ENCODE measurements at regions of chr14 and their contacts with region 1.

Region 1: GRCh38 chr14:106417224-106418049 is 891.1 kb downstream of the TMEM121 start:
- DNase-seq: peak; percentile 88
- H3K4me3 Mint-ChIP-seq: no peak overlapping the region
- H3K27ac Mint-ChIP-seq: no peak overlapping the region
- H3K4me1 Mint-ChIP-seq: peaks cover 7% of the 10 kb centered on the region
- H3K27me3 Mint-ChIP-seq: peaks cover 16% of the 10 kb centered on the region

Region 2: GRCh38 chr14:106277503-106277902 is 139.9 kb before region 1 on chr14:
- CTCF ChIA-PET with region 1: interaction called, 15 read pairs
- POLR2A ChIA-PET with region 1: no interaction called
- DNase-seq: peak; percentile 21
- H3K4me3 Mint-ChIP-seq: peak overlapping the region; percentile 14
- H3K27ac Mint-ChIP-seq: no peak overlapping the region
- H3K4me1 Mint-ChIP-seq: peaks cover 24% of the 10 kb centered on the region
- H3K27me3 Mint-ChIP-seq: peaks cover 25% of the 10 kb centered on the region

Region 3: DNA sequence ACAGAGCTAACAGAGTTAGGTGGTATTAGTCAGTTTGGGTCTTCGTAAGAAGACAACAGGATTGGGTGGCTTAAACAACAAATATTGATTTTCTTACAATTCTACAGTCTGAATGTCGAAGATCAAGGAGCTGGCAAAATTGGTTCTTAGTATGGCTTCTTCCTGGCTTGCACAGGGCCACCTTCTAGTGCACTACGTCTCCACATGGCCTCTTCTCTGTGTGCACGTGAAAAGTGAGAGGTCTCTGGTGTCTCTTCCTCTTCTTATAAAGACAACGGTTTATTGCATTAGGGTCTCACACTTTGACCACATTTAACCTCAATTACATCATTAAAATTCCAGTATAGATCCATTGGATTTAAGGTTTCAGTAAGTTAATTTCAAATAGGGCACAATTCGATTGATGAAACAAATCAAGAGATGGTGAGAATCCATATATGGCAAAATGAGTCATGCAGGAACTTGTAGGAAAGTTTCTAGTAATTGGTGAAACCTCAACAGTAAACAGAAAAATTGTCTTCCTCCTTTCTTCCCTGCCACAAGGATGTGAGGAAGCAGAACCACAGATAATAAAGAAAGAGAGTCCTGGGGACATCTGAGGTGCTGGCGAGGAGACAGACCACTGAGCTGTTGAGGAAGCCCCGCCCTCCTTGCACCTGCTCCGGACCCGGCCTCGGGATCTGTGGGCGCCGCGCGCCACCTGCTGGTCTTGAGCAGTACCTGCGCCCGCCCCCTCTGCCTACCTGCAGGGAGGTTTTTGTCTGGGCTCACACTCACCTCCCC is 44.4 kb before region 1 on chr14:
- CTCF ChIA-PET with region 1: interaction called, 58 read pairs
- POLR2A ChIA-PET with region 1: no interaction called
- DNase-seq: peak; percentile 79
- H3K4me3 Mint-ChIP-seq: no peak overlapping the region
- H3K27ac Mint-ChIP-seq: no peak overlapping the region
- H3K4me1 Mint-ChIP-seq: peaks cover 24% of the 10 kb centered on the region
- H3K27me3 Mint-ChIP-seq: peaks cover 11% of the 10 kb centered on the region

Region 4: GRCh38 chr14:106395456-106396050 is 21.9 kb before region 1 on chr14:
- CTCF ChIA-PET with region 1: interaction called, 66 read pairs
- POLR2A ChIA-PET with region 1: no interaction called
- DNase-seq: no peak
- H3K4me3 Mint-ChIP-seq: no peak overlapping the region
- H3K27ac Mint-ChIP-seq: no peak overlapping the region
- H3K4me1 Mint-ChIP-seq: peaks cover 26% of the 10 kb centered on the region
- H3K27me3 Mint-ChIP-seq: peaks cover 14% of the 10 kb centered on the region

Region 5: GRCh38 chr14:106491851-106492250 is 74.4 kb after region 1 on chr14:
- CTCF ChIA-PET with region 1: interaction called, 30 read pairs
- POLR2A ChIA-PET with region 1: no interaction called
- DNase-seq: no peak
- H3K4me3 Mint-ChIP-seq: no peak overlapping the region
- H3K27ac Mint-ChIP-seq: no peak overlapping the region
- H3K4me1 Mint-ChIP-seq: peaks cover 35% of the 10 kb centered on the region
- H3K27me3 Mint-ChIP-seq: no peaks in the 10 kb centered on the region

Region 6: DNA sequence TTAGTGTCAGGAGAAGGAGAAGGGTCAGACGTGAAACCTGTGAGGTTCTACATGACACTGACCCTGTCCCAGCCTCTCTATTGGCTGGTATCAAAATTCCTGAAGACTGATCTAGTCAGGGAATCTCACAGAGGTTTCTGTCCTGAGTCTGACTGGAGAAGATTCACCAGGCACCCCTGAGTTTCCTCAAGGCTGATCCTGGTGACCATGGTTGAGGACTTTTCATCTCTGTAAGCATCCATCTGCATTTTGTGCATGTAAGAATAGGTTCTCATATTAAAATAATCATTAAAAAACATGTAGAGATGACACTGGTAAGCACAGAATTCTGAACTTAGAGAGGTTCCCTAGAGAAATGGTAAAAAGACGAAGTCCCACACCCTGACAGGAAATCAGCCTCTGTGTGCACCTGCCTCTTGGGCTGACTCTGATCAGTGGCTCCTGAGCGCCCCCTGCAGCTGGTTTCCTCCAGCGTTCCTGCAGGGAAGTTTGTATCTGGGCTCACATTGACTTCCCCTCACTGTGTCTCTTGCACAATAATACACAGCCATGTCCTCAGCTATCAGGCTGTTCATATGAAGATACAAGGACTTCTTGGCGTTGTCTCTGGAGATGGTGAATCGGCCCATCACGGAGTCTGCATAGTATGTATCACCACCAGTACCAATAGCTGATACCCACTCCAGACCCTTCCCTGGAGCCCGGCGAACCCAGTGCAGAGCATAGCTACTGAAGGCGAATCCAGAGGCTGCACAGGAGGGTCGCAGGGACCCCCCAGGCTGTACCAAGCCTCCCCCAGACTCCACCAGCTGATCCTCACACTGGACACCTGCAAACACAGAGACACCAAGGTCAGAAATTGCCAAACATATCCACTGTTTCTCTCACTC is 100.9 kb after region 1 on chr14:
- CTCF ChIA-PET with region 1: interaction called, 15 read pairs
- POLR2A ChIA-PET with region 1: no interaction called
- DNase-seq: peak; percentile 88
- H3K4me3 Mint-ChIP-seq: no peak overlapping the region
- H3K27ac Mint-ChIP-seq: no peak overlapping the region
- H3K4me1 Mint-ChIP-seq: peaks cover 18% of the 10 kb centered on the region
- H3K27me3 Mint-ChIP-seq: peaks cover 33% of the 10 kb centered on the region

Region 7: DNA sequence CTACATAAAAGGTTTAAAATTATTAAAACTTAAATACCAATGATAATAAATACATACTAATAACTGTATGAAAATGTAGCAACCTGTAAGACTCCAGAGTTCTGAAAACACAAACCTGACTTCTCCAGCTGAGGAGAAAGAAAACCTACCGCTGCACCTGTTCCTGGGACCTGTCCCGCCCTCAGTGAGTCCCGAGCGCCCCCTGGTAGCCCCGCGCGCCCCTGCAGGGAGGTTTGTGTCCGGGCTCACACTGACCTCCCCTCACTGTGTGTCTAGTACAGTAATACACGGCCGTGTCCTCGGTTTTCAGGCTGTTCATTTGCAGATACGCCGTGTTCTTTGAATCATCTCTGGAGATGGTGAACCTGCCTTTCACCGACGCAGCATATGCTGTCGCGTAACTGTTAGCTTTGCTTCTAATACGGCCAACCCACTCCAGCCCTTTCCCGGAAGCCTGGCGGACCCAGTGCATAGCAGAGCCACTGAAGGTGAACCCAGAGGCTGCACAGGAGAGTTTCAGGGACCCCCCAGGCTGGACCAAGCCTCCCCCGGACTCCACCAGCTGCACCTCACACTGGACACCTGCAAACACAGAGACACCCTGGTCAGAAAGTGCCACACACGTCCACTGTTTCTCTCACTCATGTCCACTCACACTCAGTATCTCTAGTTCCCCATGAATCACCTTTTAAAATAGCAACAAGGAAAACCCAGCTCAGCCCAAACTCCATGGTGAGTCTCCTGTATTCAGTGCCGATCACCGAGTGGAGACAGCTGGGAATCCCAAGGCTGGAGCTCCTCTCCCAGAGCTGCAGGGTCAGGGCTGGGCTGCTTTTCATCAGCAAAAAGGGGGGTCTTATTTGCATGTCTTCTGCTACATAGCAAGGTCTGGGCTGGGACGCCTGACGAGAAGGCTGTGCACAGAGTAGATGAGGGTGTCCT is 385.3 kb after region 1 on chr14:
- CTCF ChIA-PET with region 1: no interaction called
- POLR2A ChIA-PET with region 1: no interaction called
- DNase-seq: no peak
- H3K4me3 Mint-ChIP-seq: no peak overlapping the region
- H3K27ac Mint-ChIP-seq: no peak overlapping the region
- H3K4me1 Mint-ChIP-seq: no peaks in the 10 kb centered on the region
- H3K27me3 Mint-ChIP-seq: peaks cover 51% of the 10 kb centered on the region

Measured in activated CD4-positive, alpha-beta T cell treated with anti-CD3 and anti-CD28 coated beads, Interleukin-2, amount 10 ng/mL, durations not matched to agents 7 days and 5 days (primary cell).